AG04449 (cell line): ENCODE measurements at regions of chr20 and their contacts with region 1.

Region 1: DNA sequence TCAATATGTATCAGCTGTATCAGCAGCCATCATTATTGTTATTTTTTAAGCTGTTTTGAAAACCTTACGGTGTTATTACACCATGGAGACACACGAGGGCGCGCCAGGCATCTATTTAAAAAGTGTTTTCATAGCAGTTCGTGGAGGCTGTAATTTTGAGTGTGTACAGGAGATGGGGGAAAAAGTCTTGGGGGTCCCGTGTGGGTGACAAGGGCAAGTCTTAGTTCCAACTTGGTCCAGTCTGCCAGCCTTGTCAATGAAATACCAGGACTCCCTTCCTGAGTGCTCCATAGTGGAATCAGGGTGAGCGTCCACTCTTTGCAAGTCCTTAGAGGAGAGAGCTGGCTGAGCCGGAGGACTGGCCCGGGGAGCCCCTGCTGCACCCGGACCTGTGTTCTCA is 43.3 kb downstream of the SLC2A10 start:
- DNase-seq: no peak
- H3K4me3 ChIP-seq: peak overlapping the region; percentile 37
- CTCF ChIP-seq: peak; percentile 61

Region 2: DNA sequence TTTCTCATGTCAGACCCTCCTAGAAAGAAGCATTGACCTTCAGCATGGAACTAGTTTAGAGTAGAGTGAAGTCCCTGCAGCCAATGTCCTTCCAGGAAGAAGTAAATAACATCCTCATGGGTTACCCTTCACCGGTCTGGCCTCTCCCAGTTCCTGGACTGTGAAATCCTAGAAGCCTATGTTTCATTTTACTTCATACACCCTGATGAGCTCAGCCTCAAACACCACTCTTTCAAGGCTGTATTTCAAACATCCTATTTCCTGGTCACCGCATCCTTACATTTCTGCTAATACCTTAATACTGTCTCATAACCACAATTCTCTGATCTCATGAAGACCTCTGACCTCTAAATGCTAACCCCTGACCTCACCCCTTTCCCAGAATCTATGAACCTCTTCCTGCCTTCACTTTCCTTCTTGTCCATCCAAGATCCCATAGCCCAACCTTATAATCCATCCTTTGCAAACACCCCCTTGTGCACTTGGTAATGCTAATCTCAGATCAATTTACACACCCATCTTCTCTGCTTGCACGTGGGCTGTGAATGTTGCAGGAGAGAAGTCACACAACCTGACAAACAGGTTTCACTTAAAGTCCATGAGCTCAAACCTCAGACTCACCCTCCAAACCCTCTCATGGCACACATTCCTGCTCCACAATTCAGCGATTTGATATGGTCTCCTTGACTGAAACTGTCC is 13.1 kb before region 1 on chr20:
- CTCF ChIA-PET with region 1: interaction called, 43 read pairs
- POLR2A ChIA-PET with region 1: no interaction called
- DNase-seq: no peak
- H3K4me3 ChIP-seq: no peak overlapping the region
- CTCF ChIP-seq: no peak

Region 3: DNA sequence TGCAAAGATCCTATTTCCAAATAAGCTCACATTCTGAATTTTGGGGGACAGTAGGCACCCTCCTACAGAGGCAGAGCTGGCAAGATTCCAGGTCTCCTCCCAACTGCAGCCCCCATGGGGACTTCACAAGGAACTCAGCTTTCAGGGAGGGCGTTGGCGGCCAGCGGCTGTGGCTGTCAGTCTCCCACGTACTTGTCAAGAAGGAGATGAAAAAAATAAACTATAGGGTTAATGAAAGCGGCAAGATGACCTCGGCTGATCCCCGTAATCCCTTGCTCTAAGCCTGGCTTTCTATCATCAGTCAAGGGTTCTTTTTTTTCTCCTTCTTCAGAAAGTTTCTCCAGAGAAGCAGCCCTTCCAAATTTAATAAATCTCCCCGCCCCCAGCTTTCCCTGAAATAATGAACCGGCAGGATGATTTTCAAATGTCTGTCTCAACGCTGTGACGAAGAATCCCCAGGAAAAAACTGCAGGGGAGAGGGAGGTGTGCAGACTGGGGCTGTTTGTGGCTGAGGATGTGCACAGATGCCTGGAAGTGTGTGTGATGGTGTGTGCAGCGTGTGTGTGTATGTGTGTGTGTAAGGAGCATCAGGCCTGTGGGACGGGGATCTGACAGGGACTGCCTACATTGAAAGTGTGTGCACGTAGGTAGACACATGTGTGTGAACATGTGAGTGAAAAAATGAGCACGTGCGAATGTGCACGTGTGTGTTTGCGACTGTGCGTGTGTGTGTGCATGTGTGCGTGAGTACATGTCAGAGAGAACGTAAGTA is 35.4 kb after region 1 on chr20:
- CTCF ChIA-PET with region 1: no interaction called
- POLR2A ChIA-PET with region 1: no interaction called
- DNase-seq: no peak
- H3K4me3 ChIP-seq: no peak overlapping the region
- CTCF ChIP-seq: no peak

Region 4: GRCh38 chr20:46814366-46815242 is 61.9 kb after region 1 on chr20:
- CTCF ChIA-PET with region 1: interaction called, 12 read pairs
- POLR2A ChIA-PET with region 1: no interaction called
- DNase-seq: peak; percentile 42
- H3K4me3 ChIP-seq: no peak overlapping the region
- CTCF ChIP-seq: no peak

Region 5: DNA sequence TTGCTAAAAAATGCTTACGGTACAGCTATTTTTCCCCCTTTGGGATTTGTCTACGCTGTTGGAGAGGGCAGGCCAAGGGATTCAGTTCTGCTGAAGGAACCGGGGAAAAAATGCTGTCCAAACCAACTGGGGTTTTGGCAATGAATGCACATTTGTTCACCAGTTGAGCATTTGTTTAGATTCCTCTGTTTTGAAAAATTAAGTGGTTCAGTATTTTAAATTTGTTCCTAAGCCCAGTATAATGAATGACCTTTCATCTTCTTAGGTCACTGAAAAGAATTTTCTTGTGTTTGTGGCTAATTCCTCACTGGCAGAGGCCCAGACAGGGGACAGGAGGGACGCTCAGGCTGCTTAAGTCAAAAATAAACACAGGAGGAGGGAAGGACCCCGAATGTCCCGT is 131.2 kb after region 1 on chr20:
- CTCF ChIA-PET with region 1: no interaction called
- POLR2A ChIA-PET with region 1: no interaction called
- DNase-seq: no peak
- H3K4me3 ChIP-seq: no peak overlapping the region
- CTCF ChIP-seq: no peak

Region 6: DNA sequence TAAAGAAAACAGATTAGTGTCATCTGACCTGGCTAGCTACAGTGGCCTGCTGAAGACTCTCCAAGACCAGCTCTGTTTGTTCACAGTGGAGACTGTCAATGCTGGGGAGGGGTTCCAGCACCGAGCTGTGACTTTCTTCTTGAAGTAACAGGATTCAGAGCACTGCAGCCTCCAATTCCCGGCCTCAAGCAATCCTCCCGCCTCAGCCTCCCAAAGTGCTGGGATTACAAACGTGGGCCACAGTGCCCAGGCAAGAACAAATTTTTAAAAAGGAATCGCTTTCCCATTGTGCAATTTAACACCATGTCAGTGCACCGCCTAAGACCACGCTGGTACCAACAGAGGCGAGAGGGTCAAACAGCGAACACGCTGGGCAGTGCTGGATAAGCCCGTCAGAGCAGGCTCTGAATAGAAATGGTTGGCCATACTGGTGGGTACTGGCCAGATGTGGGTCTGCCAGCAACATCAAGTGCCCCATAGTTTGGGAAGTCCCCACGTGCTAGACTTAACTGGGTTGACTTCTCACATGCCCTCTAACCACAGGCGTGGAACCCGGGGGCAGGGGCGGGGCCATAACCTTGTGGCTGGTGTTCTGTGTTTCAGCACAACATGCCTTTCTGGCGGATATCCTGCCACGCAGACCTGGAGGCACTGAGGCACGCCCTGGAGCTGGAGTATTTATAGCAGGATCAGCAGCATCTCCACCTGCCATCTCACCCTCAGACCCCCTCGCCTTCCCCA is 434.9 kb after region 1 on chr20:
- CTCF ChIA-PET with region 1: interaction called, 21 read pairs
- POLR2A ChIA-PET with region 1: no interaction called
- DNase-seq: no peak
- H3K4me3 ChIP-seq: no peak overlapping the region
- CTCF ChIP-seq: no peak